Uterus (tissue), 4 donors: ENCODE measurements at regions of chr12 and their contacts with region 1.

Region 1: GRCh38 chr12:49967042-49967776 is 5.5 kb downstream of the AQP5 start:
- DNase-seq: peak; percentile 78 to 82
- H3K4me3 ChIP-seq: no peak overlapping the region
- H3K27ac ChIP-seq: no peak overlapping the region
- H3K4me1 ChIP-seq: peaks cover 0 to 8% of the 10 kb centered on the region in 2 donors
- H3K27me3 ChIP-seq: no peaks in the 10 kb centered on the region
- CTCF ChIP-seq: peak; percentile 77 to 94 (median 86)
- POLR2A ChIP-seq: peak in 1 of 2 donors; percentile 14

Region 2: GRCh38 chr12:49866859-49867579 is 100.2 kb before region 1 on chr12:
- intact Hi-C with region 1: loop called (anchors 5 kb)
- DNase-seq: peak; percentile 82 to 83
- H3K4me3 ChIP-seq: no peak overlapping the region
- H3K27ac ChIP-seq: peak overlapping the region in 1 of 2 donors; percentile 88
- H3K4me1 ChIP-seq: peaks cover 15 to 20% of the 10 kb centered on the region in 2 donors
- H3K27me3 ChIP-seq: no peaks in the 10 kb centered on the region
- CTCF ChIP-seq: peak; percentile 93 to 99 (median 96)
- POLR2A ChIP-seq: peak in 1 of 2 donors; percentile 13

Region 3: DNA sequence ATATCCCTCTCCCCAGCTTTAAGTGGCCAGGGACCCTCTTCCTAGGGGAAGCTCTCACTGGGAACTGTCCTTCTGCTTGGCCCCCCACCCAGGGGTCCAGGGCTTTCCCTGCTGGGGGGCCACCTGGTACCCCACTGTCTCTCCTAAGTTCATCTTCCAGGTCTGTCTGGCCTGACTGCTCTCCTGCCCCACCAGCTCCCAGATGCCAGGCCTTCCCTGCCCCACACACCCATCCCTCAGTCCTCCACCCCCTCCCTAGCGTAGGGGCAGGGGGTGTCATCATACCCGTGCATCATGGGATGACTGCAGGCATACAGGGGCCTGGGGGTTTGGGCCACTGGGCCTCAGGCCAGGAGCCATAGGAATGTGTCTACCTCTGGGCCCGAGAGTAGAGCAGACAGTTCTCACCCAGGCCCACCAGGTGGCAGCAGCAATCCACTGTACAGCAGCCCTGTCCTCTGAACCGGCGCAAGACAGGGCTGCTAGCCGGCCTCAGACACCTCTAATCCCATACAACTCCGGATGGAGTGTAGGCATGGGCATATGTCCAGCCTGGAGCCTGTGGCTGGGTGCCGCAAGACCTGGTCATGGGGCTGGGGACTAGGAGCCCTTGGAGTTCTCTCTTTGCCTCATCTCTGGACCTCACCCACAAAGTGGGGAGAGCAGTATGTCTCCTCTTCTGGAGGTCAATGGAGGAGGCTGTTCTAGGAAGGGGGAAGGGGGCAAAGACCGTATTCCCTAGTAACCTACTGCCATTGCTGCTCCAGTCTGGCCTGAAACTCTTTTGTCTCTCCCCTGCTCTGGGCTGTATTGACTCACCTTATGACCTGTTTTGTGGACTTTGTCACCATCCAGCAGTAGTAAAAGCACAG is 108.0 kb after region 1 on chr12:
- intact Hi-C with region 1: loop called (anchors 2 kb)
- DNase-seq: peak; percentile 83 to 85
- H3K4me3 ChIP-seq: no peak overlapping the region
- H3K27ac ChIP-seq: no peak overlapping the region
- H3K4me1 ChIP-seq: no peaks in the 10 kb centered on the region
- H3K27me3 ChIP-seq: no peaks in the 10 kb centered on the region
- CTCF ChIP-seq: peak; percentile 93 to 98 (median 94)
- POLR2A ChIP-seq: no peak

Region 4: DNA sequence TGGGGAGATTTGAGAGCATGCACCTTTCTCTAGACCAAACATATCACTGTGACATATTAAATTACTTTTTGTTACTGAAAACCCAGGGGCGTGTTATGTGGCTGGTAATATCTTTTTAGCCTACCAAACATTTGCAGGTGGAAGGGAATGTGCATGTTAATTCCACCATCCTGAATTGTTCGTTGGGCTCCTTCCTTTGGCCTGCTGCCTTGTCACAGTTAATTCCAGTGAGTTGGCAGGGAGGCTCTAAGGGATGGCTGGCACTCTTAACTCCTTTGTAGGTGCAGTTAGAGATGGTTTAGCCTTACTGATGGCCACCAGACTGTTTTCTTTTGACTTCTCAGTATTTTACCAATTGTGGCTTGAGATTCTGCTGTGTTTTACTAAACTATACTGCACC is 602.1 kb after region 1 on chr12:
- intact Hi-C with region 1: no loop called
- DNase-seq: no peak
- H3K4me3 ChIP-seq: no peak overlapping the region
- H3K27ac ChIP-seq: peak overlapping the region; percentile 79 to 85
- H3K4me1 ChIP-seq: peaks cover 6 to 25% of the 10 kb centered on the region in 2 donors
- H3K27me3 ChIP-seq: no peaks in the 10 kb centered on the region
- CTCF ChIP-seq: no peak
- POLR2A ChIP-seq: no peak